Dendritic cell treated with granulocyte-macrophage colony-stimulating factor and Interleukin-4, amounts not matched to agents 40 ng/mL and 50 ng/mL, for 4 days (primary cell): ENCODE measurements at regions of chr17 and their contacts with region 1.

Region 1: DNA sequence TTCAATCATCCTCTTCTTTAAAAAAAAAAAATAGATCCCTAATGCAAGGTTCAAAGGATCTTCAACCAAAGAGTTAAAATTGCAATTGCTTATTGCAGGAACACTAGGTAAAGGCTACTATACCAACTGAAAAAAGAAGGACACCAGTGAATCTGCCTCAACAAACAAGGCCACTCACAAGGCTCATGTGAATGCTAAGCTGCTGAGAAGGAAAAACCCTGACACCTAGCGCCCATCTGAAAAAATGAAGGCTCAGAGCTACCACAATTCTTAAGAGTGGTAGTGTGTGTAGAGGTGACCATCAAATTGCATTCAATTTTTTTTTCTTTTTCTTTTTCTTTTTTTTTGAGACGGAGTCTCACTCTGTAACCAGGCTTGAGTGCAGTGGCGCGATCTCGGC is 201.6 kb upstream of the C17orf78 start:
- H3K4me3 Mint-ChIP-seq: no peak overlapping the region
- H3K27ac Mint-ChIP-seq: no peak overlapping the region
- H3K4me1 Mint-ChIP-seq: no peaks in the 10 kb centered on the region
- H3K27me3 Mint-ChIP-seq: no peaks in the 10 kb centered on the region

Region 2: DNA sequence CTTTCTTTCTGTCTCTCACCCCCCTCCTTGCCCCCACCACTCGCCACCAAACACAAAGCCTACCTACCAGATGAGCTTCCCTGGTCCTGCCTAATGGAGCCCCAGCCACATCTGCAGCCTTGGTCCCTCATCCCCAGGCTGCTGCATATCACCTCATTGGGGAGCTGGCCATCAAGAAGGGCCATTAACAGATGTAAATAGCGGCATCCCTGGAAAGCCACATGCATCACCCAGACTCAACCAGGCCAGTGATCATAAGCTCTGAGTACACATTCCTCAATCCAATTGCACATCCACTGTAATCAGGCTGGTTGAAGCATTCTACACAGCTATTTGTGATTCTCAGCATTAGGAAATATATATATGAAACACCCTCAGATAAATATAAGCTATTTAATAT is 10.1 kb before region 1 on chr17:
- intact Hi-C with region 1: loop called (anchors 1 kb)
- H3K4me3 Mint-ChIP-seq: no peak overlapping the region
- H3K27ac Mint-ChIP-seq: no peak overlapping the region
- H3K4me1 Mint-ChIP-seq: peaks cover 18% of the 10 kb centered on the region
- H3K27me3 Mint-ChIP-seq: no peaks in the 10 kb centered on the region